Activated CD4-positive, alpha-beta memory T cell treated with anti-CD3 and anti-CD28 coated beads for 36 hours (primary cell): ENCODE measurements at regions of chr5 and their contacts with region 1.

Region 1: GRCh38 chr5:139246394-139246793 is 47.1 kb upstream of the MATR3 start:
- DNase-seq: peak; percentile 85
- H3K4me3 Mint-ChIP-seq: peak overlapping the region; percentile 43
- H3K27ac Mint-ChIP-seq: peak overlapping the region; percentile 88
- H3K4me1 Mint-ChIP-seq: peaks cover 26% of the 10 kb centered on the region
- H3K27me3 Mint-ChIP-seq: peaks cover 2% of the 10 kb centered on the region

Region 2: DNA sequence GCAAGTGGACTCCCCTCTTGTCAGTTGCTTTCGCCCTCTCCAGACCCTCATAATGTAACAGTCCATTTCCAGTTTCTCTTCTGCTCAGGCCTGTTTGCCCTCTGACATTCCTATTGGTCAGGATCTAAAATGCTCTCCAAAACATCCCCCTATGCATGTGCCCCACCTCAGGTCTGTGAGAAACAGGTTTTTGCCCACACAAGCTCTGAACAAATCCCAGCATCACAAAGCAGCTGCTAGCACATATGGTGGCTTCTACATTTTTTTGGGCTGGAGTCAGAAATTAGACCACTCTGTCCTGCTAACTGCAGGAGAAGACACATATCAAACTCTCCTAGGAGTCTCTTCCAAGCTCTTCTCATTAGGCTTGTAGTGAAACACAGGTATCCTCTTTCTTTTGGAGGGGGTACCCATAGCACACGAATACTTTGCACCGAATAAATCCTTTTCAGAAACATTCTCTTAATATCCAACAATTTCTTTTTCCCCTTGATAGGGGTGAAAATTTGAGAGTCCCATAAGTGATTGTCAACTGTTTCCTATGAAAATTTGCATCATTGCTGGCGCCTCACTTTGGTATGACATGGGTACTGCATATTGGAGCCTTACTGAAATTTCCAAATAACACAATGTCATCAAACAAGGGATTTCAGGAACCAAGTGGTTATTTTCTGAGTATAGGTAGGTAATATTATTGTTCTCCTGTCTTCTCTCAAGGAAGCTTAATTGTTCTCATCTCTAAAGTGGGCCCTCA is 651.9 kb before region 1 on chr5:
- CTCF ChIA-PET with region 1: no interaction called
- POLR2A ChIA-PET with region 1: no interaction called
- intact Hi-C with region 1: no loop called
- DNase-seq: no peak
- H3K4me3 Mint-ChIP-seq: no peak overlapping the region
- H3K27ac Mint-ChIP-seq: no peak overlapping the region
- H3K4me1 Mint-ChIP-seq: no peaks in the 10 kb centered on the region
- H3K27me3 Mint-ChIP-seq: peaks cover 20% of the 10 kb centered on the region

Region 3: GRCh38 chr5:139197710-139198669 is 48.4 kb before region 1 on chr5 and contains the start of gene SIL1:
- CTCF ChIA-PET with region 1: interaction called, 4 read pairs
- POLR2A ChIA-PET with region 1: no interaction called
- intact Hi-C with region 1: loop called (anchors 5 kb)
- DNase-seq: peak; percentile 99
- H3K4me3 Mint-ChIP-seq: peak within 1 kb of the TSS; percentile 98
- H3K27ac Mint-ChIP-seq: peak within 1 kb of the TSS; percentile 95
- H3K4me1 Mint-ChIP-seq: peaks cover 20% of the 10 kb centered on the region
- H3K27me3 Mint-ChIP-seq: no peaks in the 10 kb centered on the region
- total RNA-seq, gene SIL1: 27.2 to 30.3 TPM

Region 4: DNA sequence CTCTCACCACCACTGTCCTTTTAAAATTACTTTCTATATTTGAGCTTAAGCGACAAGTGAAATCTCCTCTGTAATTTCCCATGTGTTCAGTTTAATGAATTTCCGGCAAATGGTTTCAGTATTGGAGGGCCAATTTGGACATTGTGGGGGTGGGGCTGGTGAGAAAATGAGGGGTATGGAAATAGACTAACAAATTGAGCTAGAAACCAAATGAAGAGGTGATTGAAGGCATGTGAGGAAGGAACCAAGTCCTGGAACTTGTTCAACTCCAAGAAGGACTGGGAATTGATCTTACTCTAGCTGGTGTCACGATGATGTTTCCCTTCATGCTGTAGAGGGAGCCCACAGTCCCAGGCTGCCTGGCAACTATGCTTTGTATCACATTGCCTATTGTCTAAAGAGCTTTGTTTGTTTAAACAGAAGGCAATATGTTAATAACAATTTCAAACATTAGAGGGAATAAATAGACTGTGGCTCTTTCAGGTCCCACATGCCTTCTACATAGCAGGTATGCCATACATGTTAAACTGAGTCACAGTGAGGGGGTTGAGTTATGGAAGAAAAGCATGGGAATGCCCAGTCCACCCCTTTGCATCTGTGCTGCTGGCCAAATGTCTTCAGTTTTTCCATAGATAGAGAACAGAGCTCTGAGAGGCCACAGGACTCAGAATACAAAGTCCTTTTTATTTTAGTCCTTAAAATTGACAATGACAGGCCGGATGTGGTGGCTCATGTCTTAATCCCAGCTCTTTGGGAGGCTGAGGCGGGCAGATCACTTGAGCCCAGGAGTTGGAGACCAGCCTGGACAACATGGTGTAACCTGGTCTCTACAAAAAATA is 22.2 kb after region 1 on chr5:
- CTCF ChIA-PET with region 1: interaction called, 12 read pairs
- POLR2A ChIA-PET with region 1: no interaction called
- intact Hi-C with region 1: loop called (anchors 2 kb)
- DNase-seq: no peak
- H3K4me3 Mint-ChIP-seq: no peak overlapping the region
- H3K27ac Mint-ChIP-seq: no peak overlapping the region
- H3K4me1 Mint-ChIP-seq: peaks cover 27% of the 10 kb centered on the region
- H3K27me3 Mint-ChIP-seq: peaks cover 2% of the 10 kb centered on the region

Region 5: DNA sequence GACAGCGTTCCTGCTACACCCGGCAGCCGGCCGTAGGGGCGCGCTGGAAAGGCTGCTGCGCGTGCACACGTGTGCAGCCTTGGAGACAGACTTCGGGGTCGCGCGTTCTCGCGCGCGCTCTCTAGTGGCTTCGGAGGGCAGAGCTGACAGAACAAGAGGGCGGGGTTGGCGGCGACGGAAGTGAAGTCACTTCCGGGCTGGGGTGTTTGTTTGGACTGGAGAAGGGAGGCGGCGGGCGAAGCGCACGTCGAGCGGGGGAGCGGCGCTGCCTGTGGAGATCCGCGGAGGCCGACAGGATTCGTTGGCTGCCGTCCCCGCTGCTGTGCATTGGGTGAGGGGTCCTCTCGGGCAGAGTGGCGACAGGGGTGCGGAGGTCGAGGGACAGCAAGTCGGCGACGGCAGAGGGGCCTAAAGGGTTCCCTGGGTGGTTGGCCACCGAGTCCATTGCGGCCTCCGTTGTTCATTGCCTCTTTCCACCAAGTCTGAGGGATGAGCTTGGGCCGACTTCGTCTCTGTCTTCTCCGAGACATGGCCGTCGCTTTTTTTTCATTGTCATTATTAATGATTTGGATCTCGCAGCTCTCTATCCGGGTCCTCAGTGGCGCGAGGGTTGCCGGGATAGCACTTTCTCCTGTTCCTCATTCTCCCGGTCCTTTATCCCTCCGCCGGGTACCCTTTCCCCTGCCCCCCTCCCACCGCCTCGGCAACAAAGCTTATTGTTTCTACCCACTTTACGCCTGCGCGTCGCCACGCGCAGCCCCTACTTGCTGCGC is 95.4 kb after region 1 on chr5 and contains the start of gene PAIP2:
- CTCF ChIA-PET with region 1: interaction called, 5 read pairs
- POLR2A ChIA-PET with region 1: interaction called, 3 read pairs
- intact Hi-C with region 1: loop called (anchors 1 kb)
- DNase-seq: peak; percentile 98
- H3K4me3 Mint-ChIP-seq: peak within 1 kb of the TSS; percentile 97
- H3K27ac Mint-ChIP-seq: peak within 1 kb of the TSS; percentile 95
- H3K4me1 Mint-ChIP-seq: peaks cover 46% of the 10 kb centered on the region
- H3K27me3 Mint-ChIP-seq: no peaks in the 10 kb centered on the region
- total RNA-seq, gene PAIP2: 104 to 110 TPM

Region 6: DNA sequence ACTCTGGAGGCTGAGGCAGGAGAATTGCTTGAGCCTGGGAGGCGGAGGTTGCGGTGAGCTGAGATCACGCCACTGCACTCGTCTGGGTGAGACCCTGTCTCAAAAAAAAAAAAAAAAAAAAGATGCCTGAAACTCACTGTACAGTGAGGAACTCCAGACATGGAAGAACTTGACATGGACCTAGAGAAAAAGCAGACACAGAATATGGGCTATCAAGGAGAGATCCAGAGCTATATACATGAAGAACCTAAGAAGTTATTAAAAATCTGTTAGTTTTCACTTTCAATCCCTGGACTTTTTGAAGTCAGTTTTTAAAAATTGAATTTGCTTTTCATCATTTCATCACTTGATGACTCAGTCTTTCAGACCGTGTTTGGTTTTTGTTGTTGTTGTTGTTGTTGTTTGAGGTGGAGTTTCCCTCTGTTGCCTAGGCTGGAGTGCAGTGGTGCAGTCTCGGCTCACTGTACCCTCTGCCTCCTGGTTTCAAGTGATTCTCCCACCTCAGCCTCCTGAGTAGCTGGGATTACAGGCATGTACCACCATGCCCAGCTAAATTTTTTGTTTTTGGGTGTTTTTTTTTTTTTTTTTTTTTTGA is 115.5 kb after region 1 on chr5:
- CTCF ChIA-PET with region 1: no interaction called
- POLR2A ChIA-PET with region 1: no interaction called
- intact Hi-C with region 1: no loop called
- DNase-seq: no peak
- H3K4me3 Mint-ChIP-seq: no peak overlapping the region
- H3K27ac Mint-ChIP-seq: no peak overlapping the region
- H3K4me1 Mint-ChIP-seq: peaks cover 15% of the 10 kb centered on the region
- H3K27me3 Mint-ChIP-seq: no peaks in the 10 kb centered on the region